K562 (cell line): ENCODE measurements at regions of chr6 and their contacts with region 1.

Region 1: DNA sequence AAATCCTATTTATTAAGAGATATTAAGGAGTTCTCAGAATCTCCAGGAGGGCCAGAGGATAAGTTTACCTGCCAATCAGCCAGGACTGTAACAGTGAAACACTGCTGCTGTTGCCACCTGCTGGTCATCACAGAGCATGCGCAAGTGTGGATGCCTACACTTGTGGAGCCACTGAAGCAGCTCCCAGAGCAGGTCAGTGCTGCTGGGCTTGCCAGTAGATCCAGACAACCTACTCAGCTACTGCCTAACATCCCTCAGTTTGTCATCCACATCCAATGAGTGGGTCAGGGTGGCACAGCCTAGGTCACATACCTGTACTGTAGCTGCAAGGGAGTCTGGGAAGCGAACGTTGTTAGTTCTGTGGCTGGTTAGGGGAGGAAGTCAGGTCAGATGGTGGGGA is 18.3 kb upstream of the NHSL1 start:
- DNase-seq: peak; percentile 25 to 35 (median 31)
- ATAC-seq: peak; percentile 79
- H3K4me3 ChIP-seq: no peak overlapping the region
- H3K27ac ChIP-seq: no peak overlapping the region
- H3K4me1 ChIP-seq: no peaks in the 10 kb centered on the region
- H3K27me3 ChIP-seq: peaks cover 0 to 11% of the 10 kb centered on the region in 2 experiments; a peak in 2 of 5 replicates
- CTCF ChIP-seq: peak; percentile 38 to 61 (median 48); a peak in 5 of 6 replicates
- EP300 ChIP-seq: no peak
- POLR2A ChIP-seq: no peak
- RAD21 ChIP-seq: peak in 1 of 2 experiments; percentile 23; a peak in 1 of 4 replicates

Region 2: DNA sequence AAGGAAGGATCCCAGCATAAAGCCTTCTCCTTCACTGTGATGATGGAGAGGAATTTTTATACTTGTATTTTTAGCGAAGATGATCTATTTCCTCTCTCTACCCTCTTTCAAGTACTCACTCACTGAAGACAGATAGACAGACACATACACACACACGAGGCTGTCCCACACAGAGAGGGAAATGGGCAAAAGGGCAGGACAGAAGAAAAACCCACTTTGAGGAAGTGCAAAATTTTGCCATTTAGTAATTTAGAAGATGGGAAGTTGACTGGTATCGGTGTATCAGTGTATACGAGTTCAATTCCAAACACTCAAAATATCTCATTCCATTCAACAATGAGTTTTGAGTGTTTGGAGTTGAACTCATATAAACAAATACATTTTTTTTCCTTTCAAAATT is 82.7 kb before region 1 on chr6:
- CTCF ChIA-PET with region 1: no interaction called
- POLR2A ChIA-PET with region 1: no interaction called
- in situ Hi-C with region 1: loop called (anchors 5 kb)
- intact Hi-C with region 1: no loop called
- DNase-seq: no peak
- ATAC-seq: no peak
- H3K4me3 ChIP-seq: no peak overlapping the region
- H3K27ac ChIP-seq: no peak overlapping the region
- H3K4me1 ChIP-seq: peaks cover 0 to 3% of the 10 kb centered on the region in 2 experiments; a peak in 1 of 5 replicates
- H3K27me3 ChIP-seq: peaks cover 33 to 40% of the 10 kb centered on the region in 2 experiments
- CTCF ChIP-seq: no peak
- EP300 ChIP-seq: no peak
- POLR2A ChIP-seq: no peak
- RAD21 ChIP-seq: no peak